Tibial artery (tissue), 4 donors: ENCODE measurements at regions of chr7 and their contacts with region 1.

Region 1: DNA sequence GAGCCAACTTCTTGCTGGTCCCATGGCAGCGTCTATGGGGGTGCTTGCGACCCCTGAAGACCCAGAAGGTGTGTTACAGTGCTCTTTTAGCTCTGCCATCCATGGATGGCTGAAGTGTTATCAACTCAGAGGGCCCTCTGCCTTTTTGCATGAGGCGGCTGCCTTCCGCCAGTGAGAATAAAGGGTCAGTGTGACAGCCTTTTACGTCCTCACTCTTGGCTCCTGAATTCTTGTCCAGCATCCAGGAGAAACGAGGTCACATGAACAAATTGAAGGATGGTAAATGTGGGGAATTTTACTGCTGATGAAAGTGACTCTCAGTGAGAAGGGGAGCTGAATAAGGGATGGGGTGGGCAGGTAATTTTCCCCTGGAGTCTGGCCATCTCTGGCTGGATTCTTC is 24.1 kb downstream of the SSMEM1 start:
- DNase-seq: no peak
- H3K4me3 ChIP-seq: no peak overlapping the region
- H3K27ac ChIP-seq: no peak overlapping the region
- H3K4me1 ChIP-seq: no peaks in the 10 kb centered on the region
- H3K27me3 ChIP-seq: no peaks in the 10 kb centered on the region
- CTCF ChIP-seq: no peak

Region 2: GRCh38 chr7:130733931-130734814 is 502.4 kb after region 1 on chr7 and contains the start of gene KLF14:
- intact Hi-C with region 1: loop called (anchors 10 kb)
- DNase-seq: no peak
- H3K4me3 ChIP-seq: peak within 1 kb of the TSS; percentile 42 to 48
- H3K27ac ChIP-seq: no peak within 1 kb of the TSS
- H3K4me1 ChIP-seq: no peaks in the 10 kb centered on the region
- H3K27me3 ChIP-seq: peaks cover 0 to 80% of the 10 kb centered on the region in 2 donors
- CTCF ChIP-seq: no peak

Region 3: GRCh38 chr7:130831817-130832481 is 600.2 kb after region 1 on chr7:
- intact Hi-C with region 1: loop called (anchors 10 kb)
- DNase-seq: no peak
- H3K4me3 ChIP-seq: no peak overlapping the region
- H3K27ac ChIP-seq: no peak overlapping the region
- H3K4me1 ChIP-seq: peaks cover 0 to 6% (median 0%) of the 10 kb centered on the region in 4 donors
- H3K27me3 ChIP-seq: no peaks in the 10 kb centered on the region
- CTCF ChIP-seq: peak; percentile 66 to 67